ENCODE measurements at regions of chr2 and their contacts with region 1.

Region 1: GRCh38 chr2:146161256-146161882 is 1641.5 kb upstream of the ZEB2 start:
- DNase-seq: no peak
- H3K4me3 ChIP-seq: no peak overlapping the region
- H3K27ac ChIP-seq: no peak overlapping the region
- H3K4me1 ChIP-seq: no peaks in the 10 kb centered on the region
- H3K27me3 ChIP-seq: no peaks in the 10 kb centered on the region
- CTCF ChIP-seq: no peak
- POLR2A ChIP-seq: no peak

Region 2: DNA sequence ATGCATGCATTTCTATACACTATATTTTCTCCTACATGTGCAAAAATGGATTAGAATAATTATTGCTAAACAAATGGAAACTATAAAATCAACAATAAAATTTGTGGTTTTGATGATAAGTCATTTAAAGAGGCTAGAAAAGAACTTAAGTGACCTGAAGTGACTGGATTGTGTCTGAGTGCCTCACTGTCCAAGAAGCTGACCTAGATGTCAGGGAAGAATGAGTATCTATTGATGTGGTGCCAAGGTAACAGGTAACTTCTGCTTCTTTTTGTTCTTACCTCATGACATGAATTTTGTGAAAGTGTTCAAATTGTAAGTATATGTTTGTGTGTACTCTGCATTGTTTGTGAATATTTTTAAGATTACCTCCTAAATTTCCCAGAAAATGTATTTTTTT is 59.6 kb after region 1 on chr2:
- intact Hi-C with region 1: loop called (anchors 2 kb)
- DNase-seq: no peak
- H3K4me3 ChIP-seq: no peak overlapping the region
- H3K27ac ChIP-seq: no peak overlapping the region
- H3K4me1 ChIP-seq: no peaks in the 10 kb centered on the region
- H3K27me3 ChIP-seq: no peaks in the 10 kb centered on the region
- CTCF ChIP-seq: no peak
- POLR2A ChIP-seq: no peak

Measured in breast epithelium (tissue), 4 donors.